ENCODE measurements at regions of chr2 and their contacts with region 1.

Region 1: GRCh38 chr2:157420771-157421323 is 23.0 kb downstream of the CYTIP start:
- DNase-seq: peak in 1 of 5 donors; percentile 29
- H3K4me3 ChIP-seq: no peak overlapping the region
- H3K4me3 Mint-ChIP-seq: peak overlapping the region in 7 of 8 donors; percentile 31 to 82 (median 52)
- H3K27ac ChIP-seq: peak overlapping the region; percentile 36
- H3K27ac Mint-ChIP-seq: peak overlapping the region; percentile 83 to 97 (median 92)
- H3K4me1 ChIP-seq: peaks cover 87% of the 10 kb centered on the region
- H3K4me1 Mint-ChIP-seq: peaks cover 54 to 76% (median 67%) of the 10 kb centered on the region in 4 donors
- H3K27me3 ChIP-seq: no peaks in the 10 kb centered on the region
- H3K27me3 Mint-ChIP-seq: no peaks in the 10 kb centered on the region

Region 2: DNA sequence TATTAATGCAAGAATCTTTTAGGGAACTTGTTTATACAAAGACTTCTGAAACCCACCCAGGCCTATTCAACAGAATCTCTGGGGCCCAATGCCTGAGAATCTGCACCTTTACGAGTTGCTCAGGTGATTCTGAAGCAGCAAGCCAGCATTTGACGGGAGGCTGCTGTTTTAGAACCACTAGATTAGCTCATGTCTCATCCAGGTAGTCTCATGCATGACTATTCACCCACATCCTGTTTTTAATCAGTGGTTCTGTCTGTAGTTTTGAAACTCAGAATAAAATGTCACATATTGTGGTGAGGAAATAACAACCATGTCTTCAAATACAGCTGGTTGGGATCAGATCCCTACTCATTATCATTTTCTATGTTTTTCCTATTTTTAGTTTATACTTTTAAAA is 16.5 kb before region 1 on chr2:
- CTCF ChIA-PET with region 1: interaction called, 20 read pairs
- POLR2A ChIA-PET with region 1: interaction called, 1,017 read pairs
- intact Hi-C with region 1: loop called (anchors 1 kb)
- DNase-seq: peak; percentile 79 to 87 (median 85)
- H3K4me3 ChIP-seq: no peak overlapping the region
- H3K4me3 Mint-ChIP-seq: peak overlapping the region; percentile 49 to 85 (median 68)
- H3K27ac ChIP-seq: peak overlapping the region; percentile 51
- H3K27ac Mint-ChIP-seq: peak overlapping the region; percentile 95 to 100 (median 99)
- H3K4me1 ChIP-seq: peaks cover 60% of the 10 kb centered on the region
- H3K4me1 Mint-ChIP-seq: peaks cover 52 to 76% (median 63%) of the 10 kb centered on the region in 4 donors
- H3K27me3 ChIP-seq: no peaks in the 10 kb centered on the region
- H3K27me3 Mint-ChIP-seq: no peaks in the 10 kb centered on the region

Region 3: DNA sequence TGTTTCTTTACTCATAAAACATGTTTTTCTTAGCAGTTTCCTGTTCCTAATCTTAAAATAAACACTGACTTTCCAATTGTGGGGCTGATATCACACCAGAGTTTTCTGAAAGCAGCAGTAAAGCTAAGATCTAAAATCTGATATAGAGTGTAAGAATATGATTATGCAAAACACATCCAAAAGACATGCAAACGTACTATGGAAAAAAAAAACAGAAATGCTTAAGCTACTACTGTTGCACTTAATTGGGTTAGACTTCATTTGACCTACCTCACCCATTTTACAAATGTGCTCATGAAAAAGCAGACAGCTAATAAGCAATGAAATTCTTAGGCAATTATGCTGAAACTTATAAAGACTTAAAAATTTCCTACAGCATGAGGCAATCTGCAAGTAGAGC is 12.5 kb after region 1 on chr2:
- CTCF ChIA-PET with region 1: interaction called, 38 read pairs
- POLR2A ChIA-PET with region 1: interaction called, 1,017 read pairs
- intact Hi-C with region 1: no loop called
- DNase-seq: no peak
- H3K4me3 ChIP-seq: peak overlapping the region; percentile 8 to 56
- H3K4me3 Mint-ChIP-seq: peak overlapping the region; percentile 78 to 100 (median 92)
- H3K27ac ChIP-seq: peak overlapping the region; percentile 59
- H3K27ac Mint-ChIP-seq: peak overlapping the region; percentile 80 to 99 (median 91)
- H3K4me1 ChIP-seq: peaks cover 84% of the 10 kb centered on the region
- H3K4me1 Mint-ChIP-seq: peaks cover 62 to 96% (median 77%) of the 10 kb centered on the region in 4 donors
- H3K27me3 ChIP-seq: no peaks in the 10 kb centered on the region
- H3K27me3 Mint-ChIP-seq: no peaks in the 10 kb centered on the region

Region 4: GRCh38 chr2:157468931-157469708 is 48.3 kb after region 1 on chr2:
- CTCF ChIA-PET with region 1: interaction called, 4 read pairs
- POLR2A ChIA-PET with region 1: interaction called, 10 read pairs
- intact Hi-C with region 1: loop called (anchors 2 kb)
- DNase-seq: peak; percentile 45 to 80 (median 70)
- H3K4me3 ChIP-seq: peak overlapping the region in 1 of 2 donors; percentile 50
- H3K4me3 Mint-ChIP-seq: peak overlapping the region; percentile 49 to 83 (median 69)
- H3K27ac ChIP-seq: peak overlapping the region; percentile 71
- H3K27ac Mint-ChIP-seq: peak overlapping the region; percentile 93 to 99 (median 98)
- H3K4me1 ChIP-seq: peaks cover 49% of the 10 kb centered on the region
- H3K4me1 Mint-ChIP-seq: peaks cover 49 to 78% (median 60%) of the 10 kb centered on the region in 4 donors
- H3K27me3 ChIP-seq: no peaks in the 10 kb centered on the region
- H3K27me3 Mint-ChIP-seq: no peaks in the 10 kb centered on the region

Region 5: DNA sequence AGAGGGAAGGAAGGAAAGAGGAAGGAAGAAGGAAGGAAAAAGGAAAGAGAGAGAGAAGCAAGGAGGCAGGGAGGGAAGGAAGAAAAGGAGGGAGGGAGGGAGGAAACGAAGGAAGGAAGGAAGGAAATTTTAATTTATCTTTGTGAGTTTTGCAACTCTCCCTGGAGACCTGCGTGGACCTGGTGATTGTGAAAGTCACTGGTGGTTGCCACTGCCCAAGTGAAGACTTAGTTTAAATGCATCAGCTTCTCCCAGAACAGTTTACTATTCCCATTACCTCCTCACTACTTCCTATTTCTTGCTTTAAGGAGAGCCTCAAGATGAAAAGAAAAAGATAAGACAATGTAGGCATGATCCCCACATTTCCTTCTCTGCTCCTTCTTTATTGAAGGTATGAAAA is 139.0 kb after region 1 on chr2:
- CTCF ChIA-PET with region 1: no interaction called
- POLR2A ChIA-PET with region 1: no interaction called
- intact Hi-C with region 1: no loop called
- DNase-seq: no peak
- H3K4me3 ChIP-seq: no peak overlapping the region
- H3K4me3 Mint-ChIP-seq: no peak overlapping the region
- H3K27ac ChIP-seq: no peak overlapping the region
- H3K27ac Mint-ChIP-seq: no peak overlapping the region
- H3K4me1 ChIP-seq: peaks cover 3% of the 10 kb centered on the region
- H3K4me1 Mint-ChIP-seq: peaks cover 10 to 20% (median 12%) of the 10 kb centered on the region in 4 donors
- H3K27me3 ChIP-seq: no peaks in the 10 kb centered on the region
- H3K27me3 Mint-ChIP-seq: no peaks in the 10 kb centered on the region

Region 6: DNA sequence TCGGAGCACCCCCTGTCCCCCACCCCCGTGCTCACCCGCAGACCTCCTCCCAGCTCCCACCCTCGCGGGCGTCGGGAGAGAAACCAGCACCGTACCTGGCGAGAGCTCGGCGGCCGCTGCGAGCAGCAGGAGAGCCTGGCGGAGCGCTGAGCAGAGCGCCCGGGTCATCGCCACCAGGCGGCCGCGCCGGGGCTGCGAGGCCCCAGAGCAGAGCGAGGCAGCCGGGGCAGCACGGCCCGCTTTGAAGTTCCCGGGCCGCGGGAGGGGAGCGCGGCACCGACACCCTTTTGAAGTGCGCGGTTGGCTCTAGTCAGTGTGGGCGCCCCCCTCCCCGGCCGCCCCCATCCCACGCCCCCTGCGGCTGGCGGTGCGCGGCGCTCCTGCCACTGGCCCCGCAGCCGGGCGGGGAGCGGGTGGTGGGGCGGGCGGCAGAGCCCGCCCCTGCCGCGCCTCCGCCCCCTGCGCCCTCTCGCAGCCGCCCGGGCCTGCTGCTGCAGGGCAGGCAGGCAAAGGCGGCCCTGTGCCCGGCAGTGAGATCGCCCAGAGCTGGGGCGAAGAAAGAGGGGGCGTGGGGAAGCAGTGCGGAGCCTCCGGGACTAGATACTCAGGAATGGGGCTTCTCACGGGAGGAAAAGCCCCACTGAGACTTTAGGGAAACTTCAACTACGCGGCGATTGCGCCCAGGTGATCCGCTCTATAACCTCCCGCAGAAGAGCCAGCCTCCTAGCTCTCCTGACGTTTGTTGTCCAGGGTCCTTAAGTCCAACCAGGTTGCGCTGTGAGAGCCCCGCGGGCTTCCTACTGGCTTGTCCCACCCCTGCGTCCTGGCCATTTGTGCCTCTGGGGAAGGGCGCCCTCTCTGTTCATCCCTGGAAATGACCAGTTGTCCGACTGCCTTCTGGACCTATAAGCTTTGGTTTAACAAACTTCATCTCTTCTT is 207.9 kb after region 1 on chr2 and contains the start of gene ACVR1C:
- CTCF ChIA-PET with region 1: no interaction called
- POLR2A ChIA-PET with region 1: no interaction called
- intact Hi-C with region 1: loop called (anchors 10 kb)
- DNase-seq: peak; percentile 70 to 81 (median 75)
- H3K4me3 ChIP-seq: peak within 1 kb of the TSS; percentile 45 to 68
- H3K4me3 Mint-ChIP-seq: peak within 1 kb of the TSS; percentile 92 to 98 (median 95)
- H3K27ac ChIP-seq: peak within 1 kb of the TSS; percentile 58
- H3K27ac Mint-ChIP-seq: peak within 1 kb of the TSS; percentile 85 to 94 (median 89)
- H3K4me1 ChIP-seq: peaks cover 39% of the 10 kb centered on the region
- H3K4me1 Mint-ChIP-seq: peaks cover 22 to 48% (median 33%) of the 10 kb centered on the region in 4 donors
- H3K27me3 ChIP-seq: no peaks in the 10 kb centered on the region
- H3K27me3 Mint-ChIP-seq: peaks cover 0 to 2% of the 10 kb centered on the region in 2 donors
- total RNA-seq, gene ACVR1C: 6.3 to 6.9 TPM

Measured in CD4-positive, alpha-beta memory T cell (primary cell).